Gastrocnemius medialis (tissue), 4 donors: ENCODE measurements at regions of chr9 and their contacts with region 1.

Region 1: GRCh38 chr9:114405294-114406034 is 17.7 kb upstream of the AKNA start:
- DNase-seq: peak; percentile 38 to 63
- ATAC-seq: peak; percentile 95 to 97
- H3K4me3 ChIP-seq: no peak overlapping the region
- H3K27ac ChIP-seq: no peak overlapping the region
- H3K4me1 ChIP-seq: no peaks in the 10 kb centered on the region
- H3K27me3 ChIP-seq: no peaks in the 10 kb centered on the region
- CTCF ChIP-seq: peak; percentile 62 to 86 (median 74)
- POLR2A ChIP-seq: no peak

Region 2: GRCh38 chr9:114452219-114453165 is 47.0 kb after region 1 on chr9:
- in situ Hi-C with region 1: no loop called
- intact Hi-C with region 1: no loop called
- DNase-seq: no peak
- ATAC-seq: no peak
- H3K4me3 ChIP-seq: no peak overlapping the region
- H3K27ac ChIP-seq: no peak overlapping the region
- H3K4me1 ChIP-seq: no peaks in the 10 kb centered on the region
- H3K27me3 ChIP-seq: no peaks in the 10 kb centered on the region
- CTCF ChIP-seq: no peak
- POLR2A ChIP-seq: no peak

Region 3: DNA sequence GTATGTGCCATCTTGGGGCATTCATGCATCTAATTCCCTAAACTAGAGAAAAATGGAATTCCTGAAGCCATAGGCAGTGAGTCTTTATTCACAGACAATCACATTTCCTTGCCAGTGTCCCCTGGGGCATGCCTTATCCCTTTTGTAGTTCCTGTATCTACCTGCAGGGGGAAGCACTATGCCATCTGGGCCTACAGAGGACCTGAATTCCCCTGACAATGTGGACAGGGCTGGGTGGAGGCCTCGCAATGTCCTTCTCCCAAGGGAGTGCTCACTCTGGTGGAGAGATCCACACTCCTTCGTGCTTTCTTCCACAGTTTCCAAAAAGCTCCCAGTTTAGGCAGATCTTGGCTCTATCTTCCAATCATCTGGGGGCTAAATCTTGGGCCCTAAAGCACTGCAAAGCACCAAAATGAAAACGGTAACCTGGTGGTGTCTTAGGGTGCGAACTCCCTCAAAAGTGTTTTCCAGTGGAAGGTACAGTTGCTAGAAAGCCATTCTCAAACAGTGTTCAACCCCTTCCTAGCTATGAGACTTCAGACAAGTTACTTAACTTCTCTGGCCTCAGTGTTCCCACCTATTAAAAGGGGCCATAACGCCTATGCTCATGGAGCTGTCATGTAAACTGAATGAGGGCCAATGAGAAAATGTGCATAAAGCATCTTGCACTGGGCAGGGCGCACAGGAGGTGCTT is 82.3 kb after region 1 on chr9:
- in situ Hi-C with region 1: no loop called
- intact Hi-C with region 1: loop called (anchors 10 kb)
- DNase-seq: peak in 1 of 2 donors; percentile 21
- ATAC-seq: peak in 1 of 2 donors; percentile 71
- H3K4me3 ChIP-seq: no peak overlapping the region
- H3K27ac ChIP-seq: no peak overlapping the region
- H3K4me1 ChIP-seq: no peaks in the 10 kb centered on the region
- H3K27me3 ChIP-seq: no peaks in the 10 kb centered on the region
- CTCF ChIP-seq: peak; percentile 54 to 75 (median 65)
- POLR2A ChIP-seq: no peak

Region 4: DNA sequence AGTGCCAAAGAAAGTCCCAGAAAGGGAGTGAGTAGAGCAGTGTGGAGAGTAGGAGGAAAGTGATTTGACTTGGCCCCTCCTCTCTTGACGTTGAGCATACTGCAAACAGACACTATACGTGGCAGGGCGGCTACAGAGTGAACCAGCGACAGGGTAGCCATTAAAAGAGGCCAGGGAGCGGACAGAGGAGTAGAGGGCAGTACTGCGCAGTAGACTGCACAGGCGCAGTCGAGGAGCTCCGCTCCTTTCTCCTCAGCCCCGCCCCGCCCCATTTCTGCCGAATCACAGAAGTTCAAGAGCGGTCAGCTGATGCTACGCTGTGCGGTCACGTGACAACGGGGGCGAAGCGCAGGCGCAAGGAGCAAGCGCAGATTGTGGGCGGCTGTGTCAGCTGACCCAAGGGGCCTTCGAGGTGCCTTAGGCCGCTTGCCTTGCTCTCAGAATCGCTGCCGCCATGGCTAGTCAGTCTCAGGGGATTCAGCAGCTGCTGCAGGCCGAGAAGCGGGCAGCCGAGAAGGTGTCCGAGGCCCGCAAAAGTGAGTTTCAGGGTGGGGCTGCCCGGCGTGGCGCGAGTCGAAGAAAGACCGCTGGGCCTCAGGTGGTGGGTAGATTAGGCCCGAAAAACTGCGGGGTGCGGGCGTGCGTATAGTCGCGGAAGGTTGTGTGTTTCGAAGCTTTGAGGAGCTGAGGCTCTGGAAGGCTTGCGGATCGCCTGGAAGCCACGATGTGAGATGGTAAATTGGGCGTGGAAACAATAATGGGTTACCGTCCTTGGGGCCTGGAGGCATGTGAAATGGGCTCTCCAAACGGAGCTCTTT is 182.1 kb after region 1 on chr9 and contains the start of gene ATP6V1G1:
- in situ Hi-C with region 1: loop called in 1 of 4 experiments (anchors 10 kb)
- intact Hi-C with region 1: no loop called
- DNase-seq: peak; percentile 99
- ATAC-seq: peak; percentile 91 to 93
- H3K4me3 ChIP-seq: peak within 1 kb of the TSS; percentile 73 to 87 (median 80)
- H3K27ac ChIP-seq: peak within 1 kb of the TSS; percentile 88 to 92 (median 90)
- H3K4me1 ChIP-seq: peaks cover 40 to 41% of the 10 kb centered on the region in 2 donors
- H3K27me3 ChIP-seq: no peaks in the 10 kb centered on the region
- CTCF ChIP-seq: peak in 2 of 5 experiments; percentile 35 to 40
- POLR2A ChIP-seq: peak; percentile 89 to 91
- total RNA-seq, gene ATP6V1G1: 105 to 191 (median 176) TPM

Region 5: DNA sequence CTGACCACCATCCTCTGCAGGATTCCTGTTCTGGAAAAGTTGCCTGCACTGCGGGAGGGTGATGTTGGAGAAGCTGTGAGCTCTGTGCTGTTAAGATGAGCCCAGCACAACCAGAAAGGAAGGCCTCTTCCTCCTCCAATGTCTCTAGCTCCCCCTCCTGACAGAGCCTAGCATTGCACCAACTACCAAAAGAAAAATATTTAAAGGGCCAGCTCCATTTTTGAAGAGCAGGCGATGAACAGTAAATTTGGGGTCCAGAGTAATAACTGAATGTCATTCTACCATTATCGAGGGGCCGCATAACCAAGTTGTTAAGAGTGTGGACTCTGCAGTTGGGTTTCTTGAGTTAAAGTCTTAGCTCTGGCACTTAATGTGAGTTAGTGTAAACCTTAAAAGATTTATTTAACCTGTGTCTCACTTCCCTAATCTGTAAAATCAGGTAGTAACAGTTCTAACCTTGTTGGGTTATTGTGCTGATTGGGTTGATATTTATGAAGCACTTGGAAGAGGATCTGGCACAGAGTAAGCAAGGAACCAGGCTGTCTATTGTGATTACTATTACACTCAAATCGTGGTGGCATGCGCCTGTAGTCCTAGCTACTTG is 248.2 kb after region 1 on chr9:
- in situ Hi-C with region 1: loop called in 3 of 4 experiments (anchors 5 to 10 kb)
- intact Hi-C with region 1: loop called (anchors 1 kb)
- DNase-seq: peak; percentile 9 to 43
- ATAC-seq: peak; percentile 16 to 66
- H3K4me3 ChIP-seq: no peak overlapping the region
- H3K27ac ChIP-seq: no peak overlapping the region
- H3K4me1 ChIP-seq: no peaks in the 10 kb centered on the region
- H3K27me3 ChIP-seq: no peaks in the 10 kb centered on the region
- CTCF ChIP-seq: peak; percentile 59 to 81 (median 76)
- POLR2A ChIP-seq: no peak

Region 6: DNA sequence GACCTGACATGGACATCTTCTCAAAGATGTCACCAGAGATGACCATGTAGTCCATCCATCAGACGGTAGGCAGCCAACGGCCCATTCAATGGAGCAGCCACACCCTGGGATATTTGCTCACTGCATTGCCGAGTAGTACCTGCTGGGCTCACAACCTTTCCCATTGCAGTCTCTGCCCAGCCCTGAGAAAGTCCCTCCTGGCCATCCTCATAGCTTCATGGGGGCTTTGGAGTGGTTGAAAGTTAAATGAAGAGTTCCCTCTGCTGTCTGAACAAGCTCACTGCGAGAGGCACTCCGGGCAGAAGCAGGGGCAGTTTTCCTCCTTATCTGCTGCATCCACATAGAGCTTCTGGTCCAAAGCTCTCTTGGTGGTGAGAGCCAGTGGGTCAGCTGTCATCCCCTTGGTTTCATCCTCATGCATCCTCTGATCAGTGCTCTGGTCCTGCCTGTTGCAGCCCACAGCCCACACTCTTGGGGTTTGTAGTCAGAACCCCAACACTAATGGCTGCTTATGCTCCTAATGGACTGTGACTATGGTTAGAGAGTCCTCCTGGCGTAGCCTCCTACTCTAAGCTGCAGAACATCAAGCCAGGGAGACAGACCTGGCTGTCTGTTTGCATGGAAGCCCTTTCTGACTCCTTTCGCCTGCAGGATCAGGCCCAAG is 501.6 kb after region 1 on chr9:
- in situ Hi-C with region 1: loop called in 1 of 4 experiments (anchors 25 kb)
- intact Hi-C with region 1: loop called (anchors 10 kb)
- DNase-seq: no peak
- ATAC-seq: no peak
- H3K4me3 ChIP-seq: no peak overlapping the region
- H3K27ac ChIP-seq: no peak overlapping the region
- H3K4me1 ChIP-seq: no peaks in the 10 kb centered on the region
- H3K27me3 ChIP-seq: no peaks in the 10 kb centered on the region
- CTCF ChIP-seq: no peak
- POLR2A ChIP-seq: no peak

Region 7: DNA sequence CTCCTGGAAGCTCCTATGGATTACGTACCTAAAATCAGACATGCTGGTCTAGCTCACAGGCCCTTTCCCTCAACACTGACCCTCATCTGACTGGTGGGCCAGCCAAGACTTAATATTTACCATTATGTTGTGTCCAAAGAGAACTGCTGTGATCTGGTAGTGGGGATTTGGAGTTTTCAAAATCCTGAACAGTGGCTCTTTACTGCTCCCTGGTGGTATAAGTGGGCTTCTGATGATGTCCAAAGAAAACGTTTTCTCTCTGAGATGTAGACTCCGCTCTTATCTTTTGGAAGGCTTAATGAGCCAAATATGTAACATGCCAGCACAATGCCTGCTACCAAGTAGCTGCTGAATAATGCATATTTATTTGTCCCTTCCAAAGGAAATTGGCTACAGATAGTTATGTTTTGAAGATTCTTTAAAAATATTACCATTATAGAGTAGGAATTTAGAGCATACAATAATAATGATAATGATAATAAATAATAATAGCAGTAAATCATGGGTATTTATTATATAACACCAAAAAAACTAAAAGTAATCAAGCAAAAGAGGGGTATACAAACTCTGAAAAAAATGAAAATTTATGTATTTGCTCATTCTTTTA is 1119.1 kb after region 1 on chr9:
- in situ Hi-C with region 1: no loop called
- intact Hi-C with region 1: loop called (anchors 10 kb)
- DNase-seq: no peak
- ATAC-seq: no peak
- H3K4me3 ChIP-seq: no peak overlapping the region
- H3K27ac ChIP-seq: no peak overlapping the region
- H3K4me1 ChIP-seq: no peaks in the 10 kb centered on the region
- H3K27me3 ChIP-seq: no peaks in the 10 kb centered on the region
- CTCF ChIP-seq: peak in 4 of 5 experiments; percentile 33 to 54 (median 46)
- POLR2A ChIP-seq: no peak